ENCODE measurements at regions of chr2 and their contacts with region 1.

Region 1: GRCh38 chr2:31170071-31170698 is 31.9 kb upstream of the GALNT14 start:
- DNase-seq: peak; percentile 69 to 77 (median 74)
- ATAC-seq: peak; percentile 98
- H3K4me3 ChIP-seq: no peak overlapping the region
- H3K27ac ChIP-seq: no peak overlapping the region
- H3K4me1 ChIP-seq: no peaks in the 10 kb centered on the region
- H3K27me3 ChIP-seq: peaks cover 0 to 3% of the 10 kb centered on the region in 2 experiments; a peak in 1 of 5 replicates
- CTCF ChIP-seq: peak; percentile 88 to 90 (median 88)
- EP300 ChIP-seq: no peak
- POLR2A ChIP-seq: no peak
- RAD21 ChIP-seq: peak; percentile 75 to 86

Region 2: DNA sequence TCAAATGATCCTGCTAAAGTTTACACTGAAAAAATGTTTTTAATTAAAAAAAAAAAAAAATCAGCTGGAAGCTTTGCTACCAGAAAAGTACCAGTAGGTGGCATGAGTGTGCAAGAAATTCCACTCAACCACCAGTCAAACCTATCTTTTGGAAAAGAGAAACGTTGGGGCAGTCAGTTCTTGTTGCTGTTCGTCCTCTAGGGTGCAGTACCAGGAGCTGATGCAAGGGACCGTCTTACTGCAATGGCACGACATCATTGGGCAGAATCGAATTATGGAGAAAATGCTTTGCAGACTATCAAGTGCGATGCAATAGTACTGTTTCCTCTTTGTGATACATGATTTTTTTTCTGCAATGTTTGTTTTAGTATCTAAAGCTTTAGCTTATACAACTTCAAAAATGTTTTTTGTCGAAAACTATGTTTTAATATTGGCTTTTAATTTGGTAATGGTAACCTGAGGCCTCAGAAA is 1005.1 kb before region 1 on chr2:
- CTCF ChIA-PET with region 1: no interaction called
- POLR2A ChIA-PET with region 1: no interaction called
- in situ Hi-C with region 1: loop called (anchors 25 kb)
- intact Hi-C with region 1: no loop called
- DNase-seq: peak; percentile 88 to 90 (median 90)
- ATAC-seq: peak; percentile 100
- H3K4me3 ChIP-seq: no peak overlapping the region
- H3K27ac ChIP-seq: no peak overlapping the region
- H3K4me1 ChIP-seq: no peaks in the 10 kb centered on the region
- H3K27me3 ChIP-seq: no peaks in the 10 kb centered on the region; a peak in 1 of 5 replicates
- CTCF ChIP-seq: peak; percentile 94 to 99 (median 98)
- EP300 ChIP-seq: 0 out of 2 replicates have a peak, but pooled peaks have one; percentile 32
- POLR2A ChIP-seq: no peak
- RAD21 ChIP-seq: peak; percentile 90 to 92

Region 3: GRCh38 chr2:30862054-30862651 is 308.0 kb before region 1 on chr2:
- CTCF ChIA-PET with region 1: interaction called, 3 read pairs
- POLR2A ChIA-PET with region 1: no interaction called
- in situ Hi-C with region 1: no loop called
- intact Hi-C with region 1: loop called (anchors 2 kb)
- DNase-seq: peak; percentile 41 to 72 (median 51)
- ATAC-seq: peak; percentile 81
- H3K4me3 ChIP-seq: no peak overlapping the region
- H3K27ac ChIP-seq: no peak overlapping the region
- H3K4me1 ChIP-seq: no peaks in the 10 kb centered on the region
- H3K27me3 ChIP-seq: peaks cover 2 to 5% of the 10 kb centered on the region in 2 experiments; a peak in 3 of 5 replicates
- CTCF ChIP-seq: peak; percentile 63 to 99 (median 99)
- EP300 ChIP-seq: no peak
- POLR2A ChIP-seq: no peak
- RAD21 ChIP-seq: peak; percentile 63 to 67

Region 4: GRCh38 chr2:31067259-31067658 is 102.9 kb before region 1 on chr2:
- CTCF ChIA-PET with region 1: no interaction called
- POLR2A ChIA-PET with region 1: no interaction called
- in situ Hi-C with region 1: no loop called
- intact Hi-C with region 1: loop called (anchors 10 kb)
- DNase-seq: peak in 3 of 4 experiments; percentile 12 to 18 (median 17)
- ATAC-seq: peak; percentile 78
- H3K4me3 ChIP-seq: no peak overlapping the region
- H3K27ac ChIP-seq: no peak overlapping the region
- H3K4me1 ChIP-seq: no peaks in the 10 kb centered on the region
- H3K27me3 ChIP-seq: no peaks in the 10 kb centered on the region; a peak in 1 of 5 replicates
- CTCF ChIP-seq: peak; percentile 40 to 49 (median 43)
- EP300 ChIP-seq: no peak
- POLR2A ChIP-seq: no peak
- RAD21 ChIP-seq: peak in 1 of 2 experiments; percentile 28; a peak in 1 of 4 replicates

Measured in K562 (cell line).